Pancreas (tissue), 10 donors: ENCODE measurements at regions of chr12 and their contacts with region 1.

Region 1: GRCh38 chr12:11658791-11659190 is 9.3 kb downstream of the ETV6 start:
- DNase-seq: no peak
- ATAC-seq: peak in 1 of 4 donors; percentile 27
- H3K4me3 ChIP-seq: no peak overlapping the region
- H3K27ac ChIP-seq: no peak overlapping the region
- H3K4me1 ChIP-seq: peaks cover 5 to 29% (median 23%) of the 10 kb centered on the region in 3 donors
- H3K27me3 ChIP-seq: no peaks in the 10 kb centered on the region
- CTCF ChIP-seq: no peak

Region 2: DNA sequence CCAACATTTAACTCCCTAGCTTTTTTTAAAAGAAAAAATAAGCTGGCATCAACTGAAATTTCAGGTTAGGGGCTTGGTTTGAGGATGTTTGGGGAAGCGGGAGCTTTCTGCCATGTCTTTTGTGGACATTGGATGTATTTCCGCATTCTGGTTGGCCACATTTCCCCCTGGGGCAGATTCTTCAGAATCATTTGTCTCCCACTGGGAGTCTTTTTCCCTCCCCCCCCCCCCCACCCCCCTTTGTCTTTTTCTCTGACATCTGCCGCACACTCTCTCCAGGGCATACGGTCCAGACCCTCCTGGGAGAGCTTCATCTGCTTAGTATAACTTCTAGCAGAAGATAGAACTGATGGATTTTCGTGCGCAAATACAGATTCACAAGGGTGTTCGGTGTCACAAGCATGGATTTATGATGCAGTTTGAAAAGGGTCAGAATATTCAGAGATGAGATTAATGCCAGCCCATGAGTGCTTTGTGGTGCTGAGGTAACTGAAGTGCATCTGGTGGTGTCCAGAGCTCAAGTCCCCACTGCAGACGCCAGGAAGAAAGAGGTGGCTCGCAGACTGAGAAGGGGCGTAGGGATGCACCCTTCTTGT is 30.9 kb after region 1 on chr12:
- intact Hi-C with region 1: loop called in 1 of 3 experiments (anchors 5 kb)
- DNase-seq: no peak
- ATAC-seq: no peak
- H3K4me3 ChIP-seq: no peak overlapping the region
- H3K27ac ChIP-seq: no peak overlapping the region
- H3K4me1 ChIP-seq: peaks cover 7 to 40% (median 9%) of the 10 kb centered on the region in 3 donors
- H3K27me3 ChIP-seq: no peaks in the 10 kb centered on the region
- CTCF ChIP-seq: no peak

Region 3: GRCh38 chr12:11785712-11786111 is 126.9 kb after region 1 on chr12:
- intact Hi-C with region 1: no loop called
- DNase-seq: no peak
- ATAC-seq: peak; percentile 16 to 75 (median 58)
- H3K4me3 ChIP-seq: no peak overlapping the region
- H3K27ac ChIP-seq: no peak overlapping the region
- H3K4me1 ChIP-seq: no peaks in the 10 kb centered on the region
- H3K27me3 ChIP-seq: no peaks in the 10 kb centered on the region
- CTCF ChIP-seq: no peak

Region 4: GRCh38 chr12:11885261-11886038 is 226.7 kb after region 1 on chr12:
- intact Hi-C with region 1: no loop called
- DNase-seq: peak in 3 of 6 donors; percentile 35 to 54 (median 42)
- ATAC-seq: peak; percentile 82 to 91 (median 84)
- H3K4me3 ChIP-seq: peak overlapping the region in 1 of 4 donors; percentile 18
- H3K27ac ChIP-seq: peak overlapping the region; percentile 49 to 90 (median 73)
- H3K4me1 ChIP-seq: peaks cover 19 to 34% (median 19%) of the 10 kb centered on the region in 3 donors
- H3K27me3 ChIP-seq: no peaks in the 10 kb centered on the region
- CTCF ChIP-seq: no peak